A549 (cell line): ENCODE measurements at regions of chr11 and their contacts with region 1.

Region 1: DNA sequence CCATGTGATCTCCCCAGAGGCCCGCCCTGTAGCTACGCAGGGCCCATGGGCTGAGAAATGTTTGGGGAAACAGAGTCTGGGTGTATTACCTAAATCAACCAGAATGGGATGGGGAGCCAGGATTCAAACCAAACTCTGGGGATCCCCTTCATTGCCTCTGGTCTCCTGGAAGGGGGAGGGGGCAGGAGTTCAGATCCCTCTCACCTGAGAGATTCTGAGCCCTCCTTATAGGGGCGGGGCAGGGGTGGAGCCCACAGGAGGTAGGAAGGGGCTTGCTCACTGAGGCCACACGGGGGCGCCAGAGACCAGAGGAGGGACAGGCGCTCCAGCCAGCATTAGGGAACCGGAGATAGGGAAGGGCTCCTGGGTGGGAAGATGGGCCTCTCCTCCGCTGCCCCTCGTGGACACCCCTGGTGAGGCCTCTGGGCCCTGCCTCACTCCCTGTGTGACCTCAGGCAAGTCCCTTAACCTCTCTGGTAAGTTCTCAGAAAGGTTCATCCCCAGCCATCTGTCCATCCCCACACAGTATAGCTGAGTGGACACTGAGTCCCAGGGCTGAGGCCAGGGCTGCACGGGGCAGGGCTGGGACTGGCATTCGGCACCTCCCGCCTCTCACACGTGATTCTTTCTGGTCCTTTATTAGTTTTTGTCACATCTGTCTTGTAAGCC is 2.7 kb upstream of the CDC42BPG start:
- DNase-seq: peak; percentile 93 to 95
- ATAC-seq: peak; percentile 69 to 86
- H3K4me3 ChIP-seq: no peak overlapping the region
- H3K27ac ChIP-seq: peak overlapping the region; percentile 57 to 92
- H3K4me1 ChIP-seq: peaks cover 74% of the 10 kb centered on the region
- CTCF ChIP-seq: peak; percentile 98
- EP300 ChIP-seq: no peak
- POLR2A ChIP-seq: no peak
- RAD21 ChIP-seq: peak; percentile 99

Region 2: GRCh38 chr11:64834723-64835620 is 12.2 kb before region 1 on chr11:
- CTCF ChIA-PET with region 1: interaction called, 462 read pairs
- POLR2A ChIA-PET with region 1: no interaction called
- DNase-seq: peak; percentile 53 to 58
- ATAC-seq: peak; percentile 62 to 83
- H3K4me3 ChIP-seq: no peak overlapping the region
- H3K27ac ChIP-seq: peak overlapping the region; percentile 60 to 68; a peak in 5 of 6 replicates
- H3K4me1 ChIP-seq: peaks cover 17% of the 10 kb centered on the region
- CTCF ChIP-seq: no peak
- EP300 ChIP-seq: no peak
- POLR2A ChIP-seq: no peak
- RAD21 ChIP-seq: no peak

Region 3: GRCh38 chr11:64878494-64879243 is 31.5 kb after region 1 on chr11 and contains the start of gene EHD1:
- CTCF ChIA-PET with region 1: interaction called, 1,607 read pairs
- POLR2A ChIA-PET with region 1: interaction called, 7 read pairs
- DNase-seq: peak; percentile 97 to 98
- ATAC-seq: peak; percentile 77 to 89
- H3K4me3 ChIP-seq: peak within 1 kb of the TSS; percentile 90
- H3K27ac ChIP-seq: peak within 1 kb of the TSS; percentile 92 to 97
- H3K4me1 ChIP-seq: peaks cover 24% of the 10 kb centered on the region
- CTCF ChIP-seq: peak; percentile 69
- EP300 ChIP-seq: no peak
- POLR2A ChIP-seq: peak; percentile 95
- RAD21 ChIP-seq: peak; percentile 26 to 66; a peak in 4 of 5 replicates
- polyA plus RNA-seq, gene EHD1: 25.9 and 27.7 TPM in 2 replicates

Region 4: GRCh38 chr11:64996710-64997380 is 149.7 kb after region 1 on chr11 and contains the start of gene BATF2:
- CTCF ChIA-PET with region 1: interaction called, 11 read pairs
- POLR2A ChIA-PET with region 1: interaction called, 4 read pairs
- DNase-seq: peak; percentile 76 to 89
- ATAC-seq: peak; percentile 90
- H3K4me3 ChIP-seq: no peak within 1 kb of the TSS
- H3K27ac ChIP-seq: peak within 1 kb of the TSS; percentile 56 to 73
- H3K4me1 ChIP-seq: peaks cover 29% of the 10 kb centered on the region
- CTCF ChIP-seq: peak; percentile 49; the same call in 2 of the 3 replicates
- EP300 ChIP-seq: no peak
- POLR2A ChIP-seq: no peak
- RAD21 ChIP-seq: peak; percentile 64 to 72
- polyA plus RNA-seq, gene BATF2: 0.67 and 0.79 TPM in 2 replicates